OCI-LY7 (cell line): ENCODE measurements at regions of chr2 and their contacts with region 1.

Region 1: DNA sequence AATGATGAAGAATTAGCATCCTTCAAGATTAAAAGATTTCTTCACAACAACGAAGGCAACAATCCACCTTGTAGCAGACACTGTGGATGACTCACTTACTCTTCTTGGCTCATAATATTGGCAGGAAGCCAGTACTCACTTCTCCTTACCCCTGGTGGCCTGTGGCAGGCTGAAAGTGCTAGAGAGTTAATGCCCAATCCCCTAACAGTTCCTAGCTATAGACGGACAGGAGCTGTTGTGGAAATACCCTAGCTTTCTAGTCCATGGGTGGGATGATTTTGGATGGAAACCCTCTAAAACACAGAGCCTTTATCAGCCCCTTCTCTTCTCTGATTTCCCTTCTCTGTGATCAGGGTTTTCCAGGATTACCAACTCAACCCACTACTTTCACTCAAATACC is 128.6 kb upstream of the NYAP2 start:
- DNase-seq: peak; percentile 92
- H3K4me3 ChIP-seq: peak overlapping the region; percentile 3
- H3K27ac ChIP-seq: peak overlapping the region; percentile 77
- H3K4me1 ChIP-seq: peaks cover 53% of the 10 kb centered on the region
- CTCF ChIP-seq: peak; percentile 38; the same call in 1 of the 2 replicates

Region 2: GRCh38 chr2:224749136-224749535 is 521.7 kb before region 1 on chr2:
- CTCF ChIA-PET with region 1: no interaction called
- POLR2A ChIA-PET with region 1: no interaction called
- intact Hi-C with region 1: loop called (anchors 10 kb)
- DNase-seq: no peak
- H3K4me3 ChIP-seq: no peak overlapping the region
- H3K27ac ChIP-seq: no peak overlapping the region
- H3K4me1 ChIP-seq: peaks cover 60% of the 10 kb centered on the region
- CTCF ChIP-seq: peak; percentile 56

Region 3: GRCh38 chr2:225008935-225009334 is 261.9 kb before region 1 on chr2:
- CTCF ChIA-PET with region 1: no interaction called
- POLR2A ChIA-PET with region 1: no interaction called
- intact Hi-C with region 1: loop called (anchors 5 kb)
- DNase-seq: peak; percentile 71
- H3K4me3 ChIP-seq: peak overlapping the region; percentile 2
- H3K27ac ChIP-seq: peak overlapping the region; percentile 70
- H3K4me1 ChIP-seq: peaks cover 29% of the 10 kb centered on the region
- CTCF ChIP-seq: peak; percentile 91

Region 4: DNA sequence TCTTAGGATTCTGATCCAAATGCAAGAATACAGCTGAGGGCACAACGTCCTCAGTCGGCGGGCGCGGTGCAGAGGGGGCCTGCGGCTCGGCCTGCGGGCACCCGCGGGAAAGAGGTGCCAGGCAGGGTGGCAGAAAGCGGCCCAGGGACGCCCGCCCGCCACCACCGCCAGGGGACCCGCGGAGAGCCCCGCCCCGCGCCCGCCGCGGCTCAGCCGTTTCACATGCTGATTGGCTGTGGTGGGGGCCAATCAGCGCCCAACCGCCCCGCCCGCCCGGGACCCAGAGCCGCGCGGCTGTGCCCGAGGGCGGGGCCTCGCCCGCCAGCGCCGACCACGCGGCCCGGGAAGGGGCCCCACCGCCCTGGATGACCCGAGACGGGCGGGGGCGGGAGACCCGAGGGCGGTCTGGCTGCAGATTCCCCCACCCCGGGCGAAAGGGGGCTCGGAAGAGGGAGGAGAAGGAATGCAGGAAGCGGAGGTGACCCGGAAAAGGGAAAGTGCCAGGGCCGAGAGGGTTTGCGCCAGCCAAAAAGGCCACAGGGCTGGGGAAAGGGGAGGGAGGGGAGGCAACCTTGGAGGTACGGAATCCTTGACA is 1520.7 kb after region 1 on chr2:
- CTCF ChIA-PET with region 1: no interaction called
- POLR2A ChIA-PET with region 1: no interaction called
- intact Hi-C with region 1: loop called (anchors 10 kb)
- DNase-seq: peak; percentile 92
- H3K4me3 ChIP-seq: peak overlapping the region; percentile 73
- H3K27ac ChIP-seq: peak overlapping the region; percentile 79
- H3K4me1 ChIP-seq: peaks cover 58% of the 10 kb centered on the region
- CTCF ChIP-seq: peak; percentile 43; the same call in 1 of the 2 replicates